ENCODE measurements at regions of chr15 and their contacts with region 1.

Region 1: GRCh38 chr15:96330450-96331145 is at the start of gene NR2F2:
- DNase-seq: peak; percentile 89
- H3K4me3 ChIP-seq: peak within 1 kb of the TSS; percentile 66
- H3K27me3 ChIP-seq: no peaks in the 10 kb centered on the region
- CTCF ChIP-seq: no peak
- polyA plus RNA-seq, gene NR2F2: 47.0 and 50.0 TPM in 2 replicates

Region 2: DNA sequence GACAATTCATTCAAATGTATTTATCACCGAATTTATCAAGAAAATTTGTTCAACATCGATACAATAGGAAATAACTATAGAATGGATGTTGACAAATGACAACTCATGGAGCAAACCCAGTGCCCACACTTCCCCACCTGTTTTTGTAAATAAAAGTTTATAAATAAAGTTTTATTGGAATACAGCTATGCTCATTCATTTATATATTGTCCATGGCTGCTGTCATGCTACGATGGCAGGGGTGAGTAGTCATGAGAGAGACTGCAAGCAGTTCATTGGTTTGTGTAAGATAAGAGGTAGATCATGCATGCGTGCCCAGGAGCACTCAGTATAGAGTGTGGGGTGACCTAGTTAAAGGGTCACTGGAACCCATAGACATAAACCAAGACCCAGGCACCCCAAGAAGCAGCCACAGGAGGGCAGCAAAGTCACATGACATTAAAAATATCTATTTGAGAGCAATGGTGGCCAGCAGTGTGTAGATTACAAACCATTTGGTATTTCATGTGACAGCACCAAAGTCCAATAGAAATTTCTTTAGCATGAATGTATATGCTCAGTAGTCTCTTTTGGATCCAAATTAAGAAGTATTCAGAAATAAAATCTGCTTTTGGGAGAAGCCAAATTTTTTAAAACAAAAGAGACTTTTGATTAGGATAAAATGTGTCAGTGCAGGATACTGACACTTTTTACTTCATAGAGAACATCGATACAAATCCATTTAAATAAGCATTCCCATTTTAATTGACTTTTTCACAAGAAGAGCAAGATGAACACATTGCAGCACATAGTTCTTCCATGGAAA is 1304.5 kb before region 1 on chr15:
- CTCF ChIA-PET with region 1: interaction called, 17 read pairs
- POLR2A ChIA-PET with region 1: no interaction called
- DNase-seq: no peak
- H3K4me3 ChIP-seq: no peak overlapping the region
- H3K27me3 ChIP-seq: no peaks in the 10 kb centered on the region
- CTCF ChIP-seq: peak; percentile 85

Region 3: GRCh38 chr15:95884276-95884675 is 446.3 kb before region 1 on chr15:
- CTCF ChIA-PET with region 1: no interaction called
- POLR2A ChIA-PET with region 1: interaction called, 13 read pairs
- DNase-seq: peak; percentile 92
- H3K4me3 ChIP-seq: no peak overlapping the region
- H3K27me3 ChIP-seq: no peaks in the 10 kb centered on the region
- CTCF ChIP-seq: no peak

Region 4: GRCh38 chr15:96345560-96346399 is 15.2 kb after region 1 on chr15:
- CTCF ChIA-PET with region 1: interaction called, 11 read pairs
- POLR2A ChIA-PET with region 1: interaction called, 15 read pairs
- DNase-seq: no peak
- H3K4me3 ChIP-seq: peak overlapping the region; percentile 28
- H3K27me3 ChIP-seq: no peaks in the 10 kb centered on the region
- CTCF ChIP-seq: peak; percentile 43

Region 5: GRCh38 chr15:97234851-97235610 is 904.4 kb after region 1 on chr15:
- CTCF ChIA-PET with region 1: interaction called, 9 read pairs
- POLR2A ChIA-PET with region 1: interaction called, 17 read pairs
- DNase-seq: no peak
- H3K4me3 ChIP-seq: no peak overlapping the region
- H3K27me3 ChIP-seq: no peaks in the 10 kb centered on the region
- CTCF ChIP-seq: peak; percentile 87